ENCODE measurements at regions of chr16 and their contacts with region 1.

Region 1: GRCh38 chr16:66091471-66091891 is 275.0 kb upstream of the CDH5 start:
- DNase-seq: no peak
- ATAC-seq: no peak
- H3K4me3 ChIP-seq: no peak overlapping the region
- H3K27ac ChIP-seq: no peak overlapping the region
- H3K4me1 ChIP-seq: no peaks in the 10 kb centered on the region
- H3K27me3 ChIP-seq: no peaks in the 10 kb centered on the region
- CTCF ChIP-seq: no peak
- POLR2A ChIP-seq: no peak

Region 2: GRCh38 chr16:65959983-65960382 is 131.5 kb before region 1 on chr16:
- intact Hi-C with region 1: no loop called
- DNase-seq: no peak
- ATAC-seq: no peak
- H3K4me3 ChIP-seq: no peak overlapping the region
- H3K27ac ChIP-seq: no peak overlapping the region
- H3K4me1 ChIP-seq: no peaks in the 10 kb centered on the region
- H3K27me3 ChIP-seq: peaks cover 0 to 2% (median 0%) of the 10 kb centered on the region in 9 donors
- CTCF ChIP-seq: no peak
- POLR2A ChIP-seq: no peak

Region 3: DNA sequence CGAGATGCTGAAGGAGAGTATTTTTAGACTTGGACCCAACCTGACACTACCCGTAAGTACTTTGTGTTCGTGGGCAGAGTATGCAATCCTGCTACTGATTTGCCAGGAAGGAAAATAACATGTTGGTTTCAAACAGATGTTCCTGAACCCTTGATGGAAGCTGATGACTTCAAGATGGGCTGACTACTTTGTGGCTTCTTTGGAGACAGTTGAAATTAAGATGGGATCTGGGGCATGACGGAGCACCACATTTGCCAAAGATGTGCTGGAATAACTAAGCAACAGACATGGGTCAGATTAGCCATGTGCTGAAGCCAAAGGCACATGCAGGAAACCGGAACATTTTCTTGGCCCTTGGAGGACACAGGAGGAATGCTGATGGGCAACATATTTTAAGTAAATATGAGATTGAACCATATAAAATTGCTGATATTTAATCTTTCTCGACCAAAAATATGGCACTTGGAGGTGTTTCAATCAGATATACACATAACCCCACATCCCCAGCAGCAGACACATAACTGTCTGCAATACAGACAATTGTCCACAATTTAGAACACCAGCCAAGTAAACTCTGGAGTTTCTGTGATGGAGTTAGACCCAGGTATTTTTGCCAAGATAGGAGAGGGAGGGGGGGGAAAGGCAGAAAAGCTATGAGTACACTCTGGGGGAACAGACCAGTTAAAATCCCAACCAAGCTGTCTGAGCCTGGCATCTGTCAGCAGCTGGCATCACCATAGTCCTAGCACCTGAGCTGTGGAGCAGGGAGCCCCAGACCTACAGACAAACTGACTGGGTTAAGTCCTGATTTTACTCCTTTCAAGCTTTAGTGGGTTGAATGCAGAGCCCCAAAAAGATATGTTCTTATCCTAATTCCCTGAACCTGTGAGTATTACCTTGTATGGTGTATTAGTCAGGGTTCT is 54.4 kb before region 1 on chr16:
- intact Hi-C with region 1: loop called in 1 of 10 experiments (anchors 10 kb)
- DNase-seq: no peak
- ATAC-seq: peak; percentile 60 to 84 (median 76)
- H3K4me3 ChIP-seq: no peak overlapping the region
- H3K27ac ChIP-seq: peak overlapping the region in 6 of 12 donors; percentile 1 to 48 (median 30)
- H3K4me1 ChIP-seq: peaks cover 0 to 24% (median 18%) of the 10 kb centered on the region in 12 donors
- H3K27me3 ChIP-seq: no peaks in the 10 kb centered on the region
- CTCF ChIP-seq: no peak
- POLR2A ChIP-seq: no peak

Region 4: GRCh38 chr16:66135421-66135831 is 43.9 kb after region 1 on chr16:
- intact Hi-C with region 1: no loop called
- DNase-seq: peak in 4 of 5 donors; percentile 64 to 83 (median 70)
- ATAC-seq: peak; percentile 87 to 96 (median 92)
- H3K4me3 ChIP-seq: no peak overlapping the region
- H3K27ac ChIP-seq: peak overlapping the region in 7 of 12 donors; percentile 4 to 67 (median 21)
- H3K4me1 ChIP-seq: peaks cover 0 to 20% (median 13%) of the 10 kb centered on the region in 12 donors
- H3K27me3 ChIP-seq: no peaks in the 10 kb centered on the region
- CTCF ChIP-seq: no peak
- POLR2A ChIP-seq: no peak

Region 5: DNA sequence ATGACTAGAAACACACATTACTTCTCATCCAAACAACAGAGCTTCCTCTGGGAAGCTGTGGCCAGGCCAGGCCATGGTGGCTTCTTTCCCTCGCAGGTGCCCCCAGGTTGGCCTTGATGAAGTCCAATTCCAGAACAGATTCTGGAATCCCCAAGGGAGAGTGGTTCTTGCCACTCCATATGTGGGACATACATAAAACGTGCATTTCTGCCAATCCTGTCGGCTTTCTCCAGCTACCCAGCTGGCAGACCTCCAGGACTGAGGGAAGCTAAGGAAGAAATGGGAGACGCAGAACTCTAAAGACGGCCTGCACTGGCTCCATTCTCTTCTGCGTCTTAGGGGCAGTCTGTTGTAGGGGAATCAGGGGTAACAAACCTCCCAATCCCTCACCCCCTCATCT is 55.8 kb after region 1 on chr16:
- intact Hi-C with region 1: no loop called
- DNase-seq: no peak
- ATAC-seq: no peak
- H3K4me3 ChIP-seq: no peak overlapping the region
- H3K27ac ChIP-seq: no peak overlapping the region
- H3K4me1 ChIP-seq: peaks cover 0 to 17% (median 5%) of the 10 kb centered on the region in 12 donors
- H3K27me3 ChIP-seq: no peaks in the 10 kb centered on the region
- CTCF ChIP-seq: no peak
- POLR2A ChIP-seq: no peak

Region 6: DNA sequence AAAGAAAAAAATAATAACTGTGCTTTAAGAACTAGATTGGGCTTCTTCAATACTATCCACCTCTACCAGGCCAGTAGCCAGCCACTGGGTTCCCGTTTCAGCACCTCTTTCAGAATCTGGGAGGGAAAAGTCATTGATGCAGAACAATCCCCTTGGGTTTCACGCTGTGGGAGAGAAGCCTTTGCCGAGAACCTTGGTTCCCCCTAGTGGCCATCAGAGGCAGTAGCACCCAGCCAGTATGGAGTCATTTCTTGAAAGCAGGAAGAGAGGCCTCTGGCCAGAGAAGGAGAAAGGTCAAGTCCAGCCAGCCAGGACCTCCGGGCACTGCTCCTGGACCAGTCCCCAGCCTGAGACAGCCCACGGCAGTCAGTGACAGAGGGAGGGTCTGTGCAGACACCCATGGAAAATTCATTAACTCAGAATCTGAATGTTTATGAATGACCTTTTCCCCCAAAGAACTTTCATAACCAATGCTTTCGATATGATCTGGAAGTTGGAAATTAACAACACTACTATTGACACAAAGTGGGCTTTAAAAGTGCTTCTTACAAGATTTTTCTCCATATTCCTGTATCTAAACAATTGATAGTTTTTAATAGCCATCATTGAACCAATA is 223.8 kb after region 1 on chr16:
- intact Hi-C with region 1: no loop called
- DNase-seq: peak in 4 of 5 donors; percentile 52 to 72 (median 58)
- ATAC-seq: peak; percentile 70 to 95 (median 86)
- H3K4me3 ChIP-seq: no peak overlapping the region
- H3K27ac ChIP-seq: no peak overlapping the region
- H3K4me1 ChIP-seq: peaks cover 0 to 10% (median 5%) of the 10 kb centered on the region in 12 donors
- H3K27me3 ChIP-seq: no peaks in the 10 kb centered on the region
- CTCF ChIP-seq: peak; percentile 88 to 98 (median 95)
- POLR2A ChIP-seq: no peak